ENCODE measurements at regions of chr20 and their contacts with region 1.

Region 1: GRCh38 chr20:45293041-45294002 is 13.3 kb upstream of the RBPJL start:
- DNase-seq: peak; percentile 89
- H3K4me3 Mint-ChIP-seq: peak overlapping the region; percentile 65
- H3K27ac Mint-ChIP-seq: no peak overlapping the region
- H3K4me1 Mint-ChIP-seq: no peaks in the 10 kb centered on the region
- H3K27me3 Mint-ChIP-seq: peaks cover 28% of the 10 kb centered on the region

Region 2: GRCh38 chr20:44936510-44936909 is 356.8 kb before region 1 on chr20:
- CTCF ChIA-PET with region 1: no interaction called
- POLR2A ChIA-PET with region 1: no interaction called
- intact Hi-C with region 1: no loop called
- DNase-seq: no peak
- H3K4me3 Mint-ChIP-seq: no peak overlapping the region
- H3K27ac Mint-ChIP-seq: no peak overlapping the region
- H3K4me1 Mint-ChIP-seq: peaks cover 10% of the 10 kb centered on the region
- H3K27me3 Mint-ChIP-seq: no peaks in the 10 kb centered on the region

Region 3: GRCh38 chr20:45070932-45071632 is 222.2 kb before region 1 on chr20:
- CTCF ChIA-PET with region 1: interaction called, 13 read pairs
- POLR2A ChIA-PET with region 1: no interaction called
- intact Hi-C with region 1: no loop called
- DNase-seq: no peak
- H3K4me3 Mint-ChIP-seq: no peak overlapping the region
- H3K27ac Mint-ChIP-seq: no peak overlapping the region
- H3K4me1 Mint-ChIP-seq: peaks cover 60% of the 10 kb centered on the region
- H3K27me3 Mint-ChIP-seq: no peaks in the 10 kb centered on the region

Region 4: GRCh38 chr20:45138561-45139300 is 154.6 kb before region 1 on chr20:
- CTCF ChIA-PET with region 1: interaction called, 84 read pairs
- POLR2A ChIA-PET with region 1: interaction called, 3 read pairs
- intact Hi-C with region 1: loop called (anchors 2 kb)
- DNase-seq: peak; percentile 88
- H3K4me3 Mint-ChIP-seq: no peak overlapping the region
- H3K27ac Mint-ChIP-seq: no peak overlapping the region
- H3K4me1 Mint-ChIP-seq: no peaks in the 10 kb centered on the region
- H3K27me3 Mint-ChIP-seq: peaks cover 5% of the 10 kb centered on the region

Region 5: DNA sequence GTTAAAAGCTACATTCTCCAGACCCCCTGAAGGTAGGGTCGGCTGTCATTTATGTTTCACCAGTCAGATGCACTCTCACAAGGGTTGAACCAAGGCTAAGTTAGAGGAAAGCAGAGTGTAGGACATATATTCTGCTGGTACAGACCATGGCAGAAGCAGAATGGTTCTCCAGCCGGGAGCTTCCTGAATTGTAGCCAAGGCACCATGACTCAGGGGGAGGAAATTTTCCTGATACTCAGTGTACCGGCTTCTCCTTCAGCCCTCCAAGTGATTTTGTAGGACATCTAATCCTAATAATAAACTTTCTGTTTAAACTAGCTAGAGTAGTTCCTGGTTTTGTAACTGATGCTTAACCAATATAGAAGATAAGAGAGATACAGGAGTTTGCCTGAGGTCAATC is 24.8 kb before region 1 on chr20:
- CTCF ChIA-PET with region 1: interaction called, 10 read pairs
- POLR2A ChIA-PET with region 1: no interaction called
- intact Hi-C with region 1: no loop called
- DNase-seq: no peak
- H3K4me3 Mint-ChIP-seq: no peak overlapping the region
- H3K27ac Mint-ChIP-seq: no peak overlapping the region
- H3K4me1 Mint-ChIP-seq: no peaks in the 10 kb centered on the region
- H3K27me3 Mint-ChIP-seq: peaks cover 17% of the 10 kb centered on the region

Region 6: DNA sequence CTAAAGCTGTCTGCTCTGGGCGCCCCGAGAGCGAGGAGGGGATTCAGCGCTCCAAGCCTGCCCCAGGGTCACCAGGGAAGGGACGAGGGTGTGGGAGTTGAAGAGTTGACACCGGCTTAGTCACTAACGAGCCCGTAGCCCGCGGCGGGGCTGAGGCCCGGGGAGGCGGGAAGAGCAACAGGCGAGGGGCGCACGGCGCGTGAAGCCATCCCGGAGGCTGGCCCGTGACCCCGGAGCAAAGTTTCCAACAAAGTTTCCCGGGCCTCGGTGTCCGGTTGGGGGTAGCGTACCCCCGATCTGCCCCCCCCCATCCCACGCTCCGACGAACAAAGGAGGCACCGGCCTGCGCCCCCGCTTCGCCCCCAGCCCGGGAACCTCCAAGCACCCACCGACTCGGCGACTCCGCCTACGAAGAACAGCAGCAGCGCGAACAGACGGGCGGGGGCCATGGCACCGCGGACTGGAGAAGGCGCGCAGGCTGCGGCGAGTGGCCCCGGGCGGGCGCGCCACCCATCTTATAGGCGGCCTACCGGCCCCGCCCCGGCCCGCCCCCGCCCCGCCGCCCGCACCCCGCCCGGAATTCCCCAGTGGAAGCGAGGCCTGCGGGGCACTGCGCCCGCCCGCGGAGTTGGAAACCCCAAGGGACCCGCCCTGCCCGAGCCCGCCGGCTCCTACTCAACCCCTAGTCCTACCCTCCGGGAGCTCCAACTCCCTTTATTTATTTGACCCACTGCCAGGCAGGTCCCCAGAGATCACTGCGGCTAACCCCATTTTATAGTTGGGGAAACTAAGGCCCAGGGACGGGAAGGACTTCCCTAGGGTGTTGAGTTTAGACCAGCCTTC is 54.8 kb after region 1 on chr20 and contains the start of gene SDC4:
- CTCF ChIA-PET with region 1: interaction called, 18 read pairs
- POLR2A ChIA-PET with region 1: no interaction called
- intact Hi-C with region 1: no loop called
- DNase-seq: peak; percentile 76
- H3K4me3 Mint-ChIP-seq: peak within 1 kb of the TSS; percentile 86
- H3K27ac Mint-ChIP-seq: peak within 1 kb of the TSS; percentile 76
- H3K4me1 Mint-ChIP-seq: peaks cover 43% of the 10 kb centered on the region
- H3K27me3 Mint-ChIP-seq: no peaks in the 10 kb centered on the region
- total RNA-seq, gene SDC4: 67.8 to 69.8 TPM

Region 7: GRCh38 chr20:45427236-45428149 is 134.2 kb after region 1 on chr20:
- CTCF ChIA-PET with region 1: no interaction called
- POLR2A ChIA-PET with region 1: no interaction called
- intact Hi-C with region 1: no loop called
- DNase-seq: no peak
- H3K4me3 Mint-ChIP-seq: no peak overlapping the region
- H3K27ac Mint-ChIP-seq: no peak overlapping the region
- H3K4me1 Mint-ChIP-seq: peaks cover 5% of the 10 kb centered on the region
- H3K27me3 Mint-ChIP-seq: no peaks in the 10 kb centered on the region

Region 8: DNA sequence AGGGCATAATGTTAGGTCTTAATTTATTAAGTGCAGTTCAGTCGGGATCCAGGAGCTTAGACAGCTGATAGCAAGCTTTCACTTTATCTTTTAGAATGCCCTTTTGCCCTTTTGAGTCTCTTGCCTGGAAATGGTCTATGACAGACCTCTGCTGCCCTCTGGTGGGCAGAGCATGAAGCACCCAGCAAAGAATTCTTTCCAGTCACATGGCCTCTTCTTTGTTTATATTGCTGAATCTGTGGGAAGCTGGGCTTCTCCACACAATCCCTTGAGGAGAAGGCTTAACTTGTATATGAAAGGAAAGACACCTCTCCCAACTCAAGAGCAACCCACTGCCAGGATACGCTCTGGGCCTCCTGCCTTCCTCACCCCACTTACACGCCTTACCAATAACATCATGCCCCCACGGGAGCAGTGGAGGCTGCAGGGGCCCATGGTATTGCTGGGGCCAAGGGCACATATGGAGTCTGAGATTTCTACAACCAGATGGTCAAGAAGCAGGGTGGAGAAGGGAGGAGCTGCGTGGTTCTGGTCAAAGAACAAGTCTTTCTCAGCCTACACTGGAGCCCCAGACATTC is 477.9 kb after region 1 on chr20:
- CTCF ChIA-PET with region 1: interaction called, 10 read pairs
- POLR2A ChIA-PET with region 1: no interaction called
- intact Hi-C with region 1: no loop called
- DNase-seq: peak; percentile 86
- H3K4me3 Mint-ChIP-seq: no peak overlapping the region
- H3K27ac Mint-ChIP-seq: no peak overlapping the region
- H3K4me1 Mint-ChIP-seq: peaks cover 5% of the 10 kb centered on the region
- H3K27me3 Mint-ChIP-seq: peaks cover 3% of the 10 kb centered on the region

Region 9: GRCh38 chr20:46699651-46700359 is 1406.5 kb after region 1 on chr20:
- CTCF ChIA-PET with region 1: no interaction called
- POLR2A ChIA-PET with region 1: no interaction called
- intact Hi-C with region 1: no loop called
- DNase-seq: no peak
- H3K4me3 Mint-ChIP-seq: no peak overlapping the region
- H3K27ac Mint-ChIP-seq: no peak overlapping the region
- H3K4me1 Mint-ChIP-seq: no peaks in the 10 kb centered on the region
- H3K27me3 Mint-ChIP-seq: peaks cover 26% of the 10 kb centered on the region

Measured in activated CD4-positive, alpha-beta memory T cell treated with anti-CD3 and anti-CD28 coated beads for 36 hours (primary cell).